Gastrocnemius medialis (tissue), 4 donors: ENCODE measurements at regions of chr1 and their contacts with region 1.

Region 1: GRCh38 chr1:37946703-37947360 is at the start of gene INPP5B:
- DNase-seq: peak; percentile 88 to 92
- ATAC-seq: peak; percentile 82
- H3K4me3 ChIP-seq: peak within 1 kb of the TSS; percentile 63 to 87 (median 78)
- H3K27ac ChIP-seq: peak within 1 kb of the TSS; percentile 82 to 94 (median 90)
- H3K4me1 ChIP-seq: peaks cover 10 to 23% of the 10 kb centered on the region in 2 donors
- H3K27me3 ChIP-seq: no peaks in the 10 kb centered on the region
- CTCF ChIP-seq: peak in 2 of 5 experiments; percentile 20 to 38
- POLR2A ChIP-seq: peak; percentile 55 to 61
- total RNA-seq, gene INPP5B: 6.8 to 13.4 (median 10.1) TPM

Region 2: DNA sequence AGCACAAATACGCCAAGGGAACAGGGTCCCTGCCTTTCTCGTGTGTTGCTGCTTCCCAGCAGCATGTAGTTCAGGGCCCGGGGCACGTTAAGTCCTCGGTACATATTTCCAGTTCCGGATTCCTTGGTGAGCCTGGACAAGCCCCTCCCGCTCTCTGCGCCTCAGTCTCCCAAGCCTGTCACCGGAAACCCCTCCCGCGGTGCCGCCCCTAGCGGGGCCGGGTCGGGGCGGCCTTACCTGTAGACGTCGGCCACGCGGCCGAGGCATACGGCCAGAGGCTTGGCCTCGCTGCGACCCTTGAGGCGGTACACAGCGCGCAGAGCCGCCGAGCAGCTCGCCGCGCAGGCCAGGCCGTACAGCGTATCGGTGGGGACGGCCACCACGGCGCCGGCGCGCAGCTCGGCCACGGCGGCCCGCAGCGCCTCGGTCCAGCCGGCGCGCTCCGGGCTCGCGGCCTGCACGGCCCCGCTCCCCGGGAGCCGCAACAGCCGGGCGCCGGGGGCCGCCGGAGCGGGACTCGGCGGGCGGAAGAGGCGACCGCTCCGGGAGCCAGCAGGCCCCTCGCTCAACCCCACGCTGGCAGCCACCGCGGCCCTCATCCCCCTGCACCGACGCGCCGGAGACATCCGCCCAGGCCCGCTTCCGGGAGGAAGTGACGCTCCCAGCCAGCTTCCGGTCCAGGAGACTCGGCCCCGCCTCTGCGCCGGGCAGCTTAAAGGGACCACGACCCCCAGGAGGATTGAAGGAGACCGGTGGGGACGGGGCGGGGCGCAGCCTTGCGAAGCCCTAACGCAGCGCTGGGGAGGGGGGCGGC is 139.1 kb before region 1 on chr1 and contains the starts of genes C1orf122 and YRDC:
- in situ Hi-C with region 1: no loop called
- intact Hi-C with region 1: loop called (anchors 5 kb)
- DNase-seq: peak; percentile 90 to 92
- ATAC-seq: peak; percentile 85 to 94
- H3K4me3 ChIP-seq: peak within 1 kb of the TSS; percentile 74 to 93 (median 87)
- H3K27ac ChIP-seq: peak within 1 kb of the TSS; percentile 89 to 98 (median 96)
- H3K4me1 ChIP-seq: peaks cover 29 to 34% of the 10 kb centered on the region in 2 donors
- H3K27me3 ChIP-seq: no peaks in the 10 kb centered on the region
- CTCF ChIP-seq: no peak
- POLR2A ChIP-seq: peak; percentile 89 to 93
- total RNA-seq, gene C1orf122: 41.2 to 96.0 (median 56.8) TPM
- total RNA-seq, gene YRDC: 11.2 to 13.6 (median 11.7) TPM

Region 3: GRCh38 chr1:37931361-37932158 is 15.3 kb before region 1 on chr1:
- in situ Hi-C with region 1: no loop called
- intact Hi-C with region 1: loop called (anchors 1 kb)
- DNase-seq: peak; percentile 92 to 96
- ATAC-seq: peak; percentile 93 to 97
- H3K4me3 ChIP-seq: peak overlapping the region; percentile 71 to 95 (median 74)
- H3K27ac ChIP-seq: peak overlapping the region; percentile 77 to 93 (median 81)
- H3K4me1 ChIP-seq: peaks cover 16 to 35% of the 10 kb centered on the region in 2 donors
- H3K27me3 ChIP-seq: no peaks in the 10 kb centered on the region
- CTCF ChIP-seq: peak in 2 of 5 experiments; percentile 35 to 49
- POLR2A ChIP-seq: peak; percentile 22 to 40

Region 4: GRCh38 chr1:37989361-37989930 is 42.6 kb after region 1 on chr1:
- in situ Hi-C with region 1: no loop called
- intact Hi-C with region 1: loop called (anchors 1 kb)
- DNase-seq: no peak
- ATAC-seq: peak in 1 of 2 donors; percentile 10
- H3K4me3 ChIP-seq: peak overlapping the region; percentile 74 to 88 (median 80)
- H3K27ac ChIP-seq: peak overlapping the region; percentile 82 to 100 (median 96)
- H3K4me1 ChIP-seq: peaks cover 14 to 30% of the 10 kb centered on the region in 2 donors
- H3K27me3 ChIP-seq: no peaks in the 10 kb centered on the region
- CTCF ChIP-seq: no peak
- POLR2A ChIP-seq: no peak

Region 5: DNA sequence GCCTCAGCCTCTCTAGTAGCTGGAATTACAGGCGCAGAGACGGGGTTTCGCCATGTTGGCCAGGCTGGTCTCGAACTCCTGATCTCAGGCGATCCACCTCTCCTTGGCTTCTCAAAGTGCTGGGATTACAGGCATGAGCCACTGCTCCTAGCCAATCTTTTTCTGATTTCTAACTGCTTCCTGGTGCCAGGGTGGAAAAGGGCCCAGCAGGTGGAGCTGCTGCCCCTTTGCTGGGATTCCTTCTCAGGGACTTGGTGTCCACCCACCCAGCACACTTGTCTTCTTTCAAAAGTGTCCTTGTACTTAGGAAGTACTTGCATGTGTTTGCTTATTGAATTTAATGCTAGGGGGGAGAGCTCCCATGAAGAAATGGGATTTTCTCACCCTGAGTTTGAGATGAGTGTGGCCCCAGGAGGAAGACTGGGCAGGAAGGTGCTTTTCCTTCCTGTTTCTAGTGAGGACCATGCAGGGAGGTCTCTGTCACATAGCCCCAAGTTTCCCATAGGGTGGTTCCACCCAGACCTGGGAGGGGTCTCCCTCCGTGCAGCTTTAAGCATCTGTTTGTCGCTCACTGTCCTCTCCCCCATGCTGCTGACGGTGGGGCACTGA is 79.9 kb after region 1 on chr1:
- in situ Hi-C with region 1: no loop called
- intact Hi-C with region 1: loop called (anchors 5 kb)
- DNase-seq: peak in 1 of 2 donors; percentile 69
- ATAC-seq: no peak
- H3K4me3 ChIP-seq: no peak overlapping the region
- H3K27ac ChIP-seq: peak overlapping the region; percentile 76 to 100 (median 84)
- H3K4me1 ChIP-seq: peaks cover 76 to 86% of the 10 kb centered on the region in 2 donors
- H3K27me3 ChIP-seq: no peaks in the 10 kb centered on the region
- CTCF ChIP-seq: peak; percentile 31 to 67 (median 49)
- POLR2A ChIP-seq: no peak